Activated B cell treated with CpG ODN at 0.5 μM for 24 hours (primary cell): ENCODE measurements at regions of chr1 and their contacts with region 1.

Region 1: DNA sequence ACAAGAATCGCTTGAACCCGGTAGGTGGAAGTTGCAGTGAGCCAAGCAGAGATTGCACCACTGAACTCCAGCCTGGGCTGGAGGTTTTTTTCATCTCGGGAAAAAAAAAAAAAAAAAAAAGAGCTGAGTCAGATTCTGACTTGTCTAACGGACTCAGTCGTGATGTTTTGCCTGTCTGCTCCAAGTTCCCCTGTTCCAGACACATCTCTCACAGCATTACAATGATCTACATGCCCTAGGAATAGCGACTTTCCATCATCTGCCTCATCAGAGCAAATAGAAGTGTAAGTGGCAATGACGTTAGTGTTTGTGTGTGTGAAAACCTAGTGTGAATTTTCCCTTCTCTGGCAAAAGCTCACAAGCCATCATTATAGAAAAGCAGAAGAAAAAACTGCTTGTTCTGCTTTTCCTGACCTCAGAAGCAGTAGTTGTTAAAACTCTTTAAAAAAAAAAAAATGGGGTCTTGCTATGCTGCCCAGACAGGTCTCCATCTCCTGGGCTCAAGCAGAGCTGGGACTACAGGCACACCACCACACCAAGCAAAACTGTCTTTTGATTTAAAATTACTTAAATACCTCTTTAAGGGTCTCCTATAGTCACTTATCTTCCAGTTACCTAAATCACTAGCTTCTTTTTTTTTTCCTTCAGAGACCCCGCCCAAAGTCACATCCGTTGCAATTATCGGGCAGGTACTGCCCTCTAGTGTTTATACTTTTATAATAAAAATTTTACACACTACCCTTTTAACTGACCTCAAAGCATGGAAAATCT is 37.3 kb downstream of the PLEKHO1 start:
- DNase-seq: peak; percentile 46
- ATAC-seq: peak; percentile 81
- H3K4me3 Mint-ChIP-seq: peak overlapping the region; percentile 73
- H3K27ac Mint-ChIP-seq: peak overlapping the region; percentile 89
- H3K4me1 Mint-ChIP-seq: peaks cover 13% of the 10 kb centered on the region
- H3K27me3 Mint-ChIP-seq: no peaks in the 10 kb centered on the region
- CTCF ChIP-seq: no peak

Region 2: DNA sequence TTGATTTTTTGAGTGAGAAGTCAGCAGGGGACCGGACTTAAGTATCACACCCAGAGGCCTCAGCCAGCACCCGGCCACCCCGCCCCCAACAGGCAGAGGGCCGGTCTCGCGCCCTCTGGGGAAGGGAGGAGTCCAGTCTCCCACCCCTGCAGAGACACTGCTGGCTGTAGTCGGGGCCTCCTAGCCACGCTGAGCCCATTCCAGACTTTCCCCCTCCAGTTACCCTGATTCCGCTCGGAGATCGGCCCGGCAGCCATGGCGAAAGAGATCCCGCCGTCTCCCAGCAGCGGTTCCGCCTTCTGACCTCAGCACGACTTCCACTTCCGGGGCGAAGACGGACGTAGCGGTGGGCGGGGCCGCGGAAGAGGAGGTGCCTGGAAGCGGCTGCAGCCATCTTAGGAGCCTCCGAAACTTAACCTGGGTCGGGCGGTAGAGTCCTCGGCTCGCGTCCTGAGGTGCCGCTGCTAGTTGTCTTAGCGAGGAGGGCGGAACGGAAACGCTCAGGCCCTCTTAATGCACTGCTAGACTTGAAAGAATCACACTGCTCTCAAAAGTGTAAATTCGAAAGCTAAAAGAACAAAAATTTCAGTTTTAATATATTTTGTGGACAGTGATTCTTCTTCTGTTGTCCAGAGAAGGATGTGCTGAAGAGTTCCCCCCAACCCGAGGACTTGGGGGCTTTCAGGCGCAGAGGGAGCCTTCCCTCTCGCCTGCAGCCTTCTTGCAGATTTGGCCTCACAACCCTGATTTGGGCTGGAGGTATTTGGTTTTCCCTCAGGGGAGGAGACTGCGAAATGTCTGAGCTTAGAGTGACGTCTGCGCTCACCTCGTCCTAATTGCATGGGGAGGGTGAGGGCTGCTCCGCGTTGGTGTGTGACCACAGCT is 259.2 kb before region 1 on chr1 and contains the start of gene SF3B4:
- CTCF ChIA-PET with region 1: interaction called, 4 read pairs
- POLR2A ChIA-PET with region 1: interaction called, 7 read pairs
- intact Hi-C with region 1: loop called (anchors 1 kb)
- DNase-seq: peak; percentile 94
- ATAC-seq: peak; percentile 96
- H3K4me3 Mint-ChIP-seq: peak within 1 kb of the TSS; percentile 98
- H3K27ac Mint-ChIP-seq: peak within 1 kb of the TSS; percentile 95
- H3K4me1 Mint-ChIP-seq: peaks cover 36% of the 10 kb centered on the region
- H3K27me3 Mint-ChIP-seq: peaks cover 12% of the 10 kb centered on the region
- CTCF ChIP-seq: no peak
- total RNA-seq, gene SF3B4: 80.8 and 86.2 TPM in 2 replicates

Region 3: DNA sequence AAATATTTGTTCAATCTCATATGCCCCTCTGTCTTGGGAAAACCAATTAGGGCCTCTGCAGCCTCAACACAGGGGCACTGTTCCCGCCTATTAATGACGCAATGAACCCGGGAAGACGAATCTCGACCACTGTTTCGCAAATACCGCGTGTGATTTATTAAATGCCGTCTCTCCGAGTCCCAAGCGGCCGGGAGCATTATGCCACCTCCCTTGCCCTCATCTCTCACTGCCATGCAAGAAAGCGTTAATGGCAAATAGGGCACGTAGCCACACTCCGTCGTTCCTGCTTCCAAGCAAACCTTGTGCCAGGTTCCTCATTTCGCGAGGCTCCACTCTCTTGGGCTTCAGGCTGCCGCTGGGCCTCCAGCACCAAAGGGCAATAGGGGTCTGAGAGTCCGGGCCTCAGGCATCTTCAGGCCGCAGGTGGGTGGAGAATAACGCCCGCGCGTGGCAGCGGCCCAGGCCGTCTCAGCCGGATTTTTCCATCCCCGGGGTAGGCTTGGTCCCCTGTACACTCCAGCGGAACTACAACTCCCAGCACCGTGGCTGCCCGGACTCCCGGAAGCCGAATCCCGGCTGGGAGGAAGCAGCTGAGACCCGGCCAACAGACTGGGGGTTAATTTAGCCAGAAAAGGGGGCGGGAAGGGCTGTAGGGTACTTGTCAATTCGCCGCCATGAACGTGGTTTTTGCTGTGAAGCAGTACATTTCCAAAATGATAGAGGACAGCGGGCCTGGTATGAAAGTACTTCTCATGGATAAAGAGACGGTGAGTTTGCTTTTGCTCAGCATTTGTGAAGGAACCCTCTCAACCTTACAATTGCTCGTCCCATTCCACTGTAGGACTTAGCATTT is 119.6 kb before region 1 on chr1 and contains the start of gene VPS45:
- CTCF ChIA-PET with region 1: interaction called, 90 read pairs
- POLR2A ChIA-PET with region 1: interaction called, 35 read pairs
- intact Hi-C with region 1: no loop called
- DNase-seq: peak; percentile 71
- ATAC-seq: peak; percentile 86
- H3K4me3 Mint-ChIP-seq: peak within 1 kb of the TSS; percentile 95
- H3K27ac Mint-ChIP-seq: peak within 1 kb of the TSS; percentile 95
- H3K4me1 Mint-ChIP-seq: peaks cover 31% of the 10 kb centered on the region
- H3K27me3 Mint-ChIP-seq: no peaks in the 10 kb centered on the region
- CTCF ChIP-seq: no peak
- total RNA-seq, gene VPS45: 39.0 and 46.0 TPM in 2 replicates

Region 4: DNA sequence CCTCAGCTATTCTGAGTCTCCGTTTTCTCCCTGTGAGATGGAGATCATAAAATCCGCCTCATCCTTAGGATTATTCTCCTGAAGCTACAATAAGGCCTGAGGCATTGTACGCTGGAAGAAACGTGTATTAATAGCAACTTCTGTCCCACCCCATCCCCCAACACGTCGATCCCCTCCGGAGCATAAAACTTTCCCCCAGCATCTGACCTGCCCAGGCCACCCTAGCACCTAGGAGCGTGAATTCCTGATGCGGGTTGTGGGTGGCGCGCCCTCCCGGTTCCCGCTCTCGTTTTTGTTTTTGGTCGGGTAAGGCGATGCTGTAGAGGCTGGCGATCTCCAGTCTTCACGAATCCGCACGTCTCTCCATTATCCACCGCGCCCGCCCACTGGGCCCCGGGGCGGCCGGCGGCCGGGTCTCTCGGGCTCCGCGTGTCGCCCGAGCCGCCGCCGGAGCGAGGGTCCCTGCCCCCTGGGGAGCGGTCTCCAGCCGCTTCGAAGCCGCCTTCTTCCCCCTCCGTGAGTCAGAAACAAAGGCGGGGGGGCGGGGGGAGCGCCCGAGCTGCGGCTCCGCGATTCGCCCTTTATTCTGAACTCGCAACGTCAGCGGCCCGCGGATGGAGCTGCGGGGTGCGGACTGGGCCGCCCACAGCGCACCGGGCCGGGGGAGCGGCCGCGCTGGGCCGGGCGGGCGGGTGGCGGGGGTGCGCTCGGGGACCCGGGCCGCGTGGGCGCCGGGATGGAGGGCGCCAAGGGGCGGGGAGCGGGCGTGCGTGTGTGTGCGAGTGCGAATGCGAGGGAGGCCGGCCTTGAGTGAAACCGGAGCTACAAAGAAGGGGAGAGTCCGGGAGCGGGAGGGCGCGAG is 37.5 kb before region 1 on chr1 and contains the start of gene PLEKHO1:
- CTCF ChIA-PET with region 1: interaction called, 5 read pairs
- POLR2A ChIA-PET with region 1: interaction called, 15 read pairs
- intact Hi-C with region 1: loop called (anchors 1 kb)
- DNase-seq: peak; percentile 76
- ATAC-seq: peak; percentile 80
- H3K4me3 Mint-ChIP-seq: peak within 1 kb of the TSS; percentile 97
- H3K27ac Mint-ChIP-seq: peak within 1 kb of the TSS; percentile 96
- H3K4me1 Mint-ChIP-seq: peaks cover 72% of the 10 kb centered on the region
- H3K27me3 Mint-ChIP-seq: no peaks in the 10 kb centered on the region
- CTCF ChIP-seq: no peak
- total RNA-seq, gene PLEKHO1: 195 and 208 TPM in 2 replicates

Region 5: DNA sequence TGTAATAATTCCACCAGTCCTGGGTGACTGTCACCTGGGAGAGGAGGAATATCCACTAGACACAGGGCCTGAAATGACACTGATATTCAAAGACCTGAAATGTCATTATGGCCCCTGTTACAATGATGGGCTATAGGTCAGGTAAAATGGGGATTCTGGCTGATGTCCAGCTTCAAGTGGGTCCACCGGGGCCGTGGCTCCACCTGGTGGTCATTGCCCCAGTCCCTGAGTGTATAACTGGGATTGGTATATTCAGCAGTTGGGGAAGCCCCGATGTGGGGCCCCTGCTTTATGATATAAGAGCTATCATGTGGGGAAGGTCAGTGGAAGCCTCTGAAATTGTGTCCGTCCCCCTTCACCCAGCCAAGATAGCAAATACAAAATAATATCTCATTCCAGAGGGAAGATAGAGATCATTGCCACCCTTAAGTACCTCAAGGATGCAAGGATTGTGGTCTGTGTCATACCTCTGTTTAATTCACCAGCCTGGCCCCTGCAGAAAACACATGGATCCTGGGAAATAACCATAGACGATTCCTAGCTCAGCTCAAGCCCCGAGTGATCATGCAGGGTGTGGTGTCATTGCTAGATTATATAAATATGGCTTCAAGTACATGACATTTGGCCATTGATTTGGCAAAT is 17.9 kb before region 1 on chr1:
- CTCF ChIA-PET with region 1: interaction called, 37 read pairs
- POLR2A ChIA-PET with region 1: interaction called, 22 read pairs
- intact Hi-C with region 1: loop called (anchors 1 kb)
- DNase-seq: peak; percentile 45
- ATAC-seq: peak; percentile 64
- H3K4me3 Mint-ChIP-seq: no peak overlapping the region
- H3K27ac Mint-ChIP-seq: no peak overlapping the region
- H3K4me1 Mint-ChIP-seq: peaks cover 34% of the 10 kb centered on the region
- H3K27me3 Mint-ChIP-seq: no peaks in the 10 kb centered on the region
- CTCF ChIP-seq: no peak

Region 6: GRCh38 chr1:150213170-150214098 is 26.5 kb after region 1 on chr1:
- CTCF ChIA-PET with region 1: interaction called, 5 read pairs
- POLR2A ChIA-PET with region 1: interaction called, 7 read pairs
- intact Hi-C with region 1: loop called (anchors 2 kb)
- DNase-seq: peak; percentile 77
- ATAC-seq: peak; percentile 99
- H3K4me3 Mint-ChIP-seq: peak overlapping the region; percentile 90
- H3K27ac Mint-ChIP-seq: peak overlapping the region; percentile 94
- H3K4me1 Mint-ChIP-seq: peaks cover 15% of the 10 kb centered on the region
- H3K27me3 Mint-ChIP-seq: no peaks in the 10 kb centered on the region
- CTCF ChIP-seq: no peak